Activated CD4-positive, alpha-beta memory T cell treated with anti-CD3 and anti-CD28 coated beads for 36 hours (primary cell): ENCODE measurements at regions of chr9 and their contacts with region 1.

Region 1: DNA sequence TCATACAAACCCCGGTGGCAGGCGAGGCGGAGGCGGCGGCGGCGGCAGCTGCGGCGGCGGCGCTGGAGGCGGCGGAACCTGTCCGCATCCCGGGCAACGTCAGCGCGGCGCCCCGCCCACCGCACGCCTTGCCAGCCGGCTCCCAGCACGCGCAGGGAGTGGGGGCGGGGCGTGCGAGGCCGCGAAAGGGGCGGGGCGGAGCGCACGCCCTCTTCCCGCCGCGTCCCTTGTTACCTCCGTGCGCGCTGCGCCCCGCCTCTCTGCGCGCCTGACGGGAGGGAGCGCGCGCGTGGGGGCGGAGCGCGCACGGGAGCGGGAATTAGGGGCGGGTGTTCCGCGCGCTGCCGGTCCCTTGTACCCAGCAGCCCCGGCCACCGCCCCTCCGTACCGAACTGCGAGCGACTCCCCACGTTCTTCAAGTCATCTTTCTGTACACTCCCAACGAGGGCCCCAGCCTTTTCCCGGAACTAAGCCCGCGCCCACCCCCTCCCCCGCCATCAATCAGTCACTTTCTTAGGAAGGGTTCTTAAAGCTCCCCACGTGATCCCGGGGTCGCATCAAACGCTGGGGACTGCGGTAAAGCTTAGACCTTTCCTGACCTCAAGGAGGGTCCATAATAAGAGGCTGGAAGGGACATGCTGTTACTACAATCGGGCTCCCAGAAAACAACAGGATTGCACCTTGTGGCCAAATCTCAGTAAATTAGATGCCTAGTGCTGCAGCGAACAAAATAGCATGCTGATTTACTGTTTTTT is at the start of gene AGTPBP1:
- DNase-seq: peak; percentile 96
- H3K4me3 Mint-ChIP-seq: peak within 1 kb of the TSS; percentile 94
- H3K27ac Mint-ChIP-seq: peak within 1 kb of the TSS; percentile 97
- H3K4me1 Mint-ChIP-seq: peaks cover 39% of the 10 kb centered on the region
- H3K27me3 Mint-ChIP-seq: peaks cover 7% of the 10 kb centered on the region
- total RNA-seq, gene AGTPBP1: 38.6 to 41.6 TPM

Region 2: GRCh38 chr9:84296146-84296843 is 1445.8 kb before region 1 on chr9:
- CTCF ChIA-PET with region 1: no interaction called
- POLR2A ChIA-PET with region 1: no interaction called
- intact Hi-C with region 1: loop called (anchors 10 kb)
- DNase-seq: peak; percentile 78
- H3K4me3 Mint-ChIP-seq: peak overlapping the region; percentile 49
- H3K27ac Mint-ChIP-seq: peak overlapping the region; percentile 98
- H3K4me1 Mint-ChIP-seq: peaks cover 58% of the 10 kb centered on the region
- H3K27me3 Mint-ChIP-seq: no peaks in the 10 kb centered on the region

Region 3: DNA sequence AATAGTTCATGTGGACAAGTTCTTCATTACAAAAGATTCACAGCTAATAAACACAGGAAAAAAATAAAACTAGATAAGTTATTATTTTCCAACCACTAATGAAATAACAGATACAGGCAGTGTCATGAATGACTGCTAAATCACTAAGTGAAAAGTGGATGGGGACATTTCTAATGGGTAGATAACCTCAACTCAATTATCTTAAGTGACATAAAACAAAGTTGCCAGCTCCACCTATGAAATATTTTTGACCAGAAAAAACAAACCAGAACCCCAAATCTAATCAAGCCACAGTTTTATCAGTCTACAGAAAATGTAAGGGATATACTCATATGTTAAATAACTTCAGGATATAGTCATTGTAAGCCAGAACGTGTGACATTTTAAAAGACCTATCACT is 74.7 kb before region 1 on chr9:
- CTCF ChIA-PET with region 1: no interaction called
- POLR2A ChIA-PET with region 1: no interaction called
- intact Hi-C with region 1: no loop called
- DNase-seq: no peak
- H3K4me3 Mint-ChIP-seq: no peak overlapping the region
- H3K27ac Mint-ChIP-seq: no peak overlapping the region
- H3K4me1 Mint-ChIP-seq: no peaks in the 10 kb centered on the region
- H3K27me3 Mint-ChIP-seq: no peaks in the 10 kb centered on the region

Region 4: DNA sequence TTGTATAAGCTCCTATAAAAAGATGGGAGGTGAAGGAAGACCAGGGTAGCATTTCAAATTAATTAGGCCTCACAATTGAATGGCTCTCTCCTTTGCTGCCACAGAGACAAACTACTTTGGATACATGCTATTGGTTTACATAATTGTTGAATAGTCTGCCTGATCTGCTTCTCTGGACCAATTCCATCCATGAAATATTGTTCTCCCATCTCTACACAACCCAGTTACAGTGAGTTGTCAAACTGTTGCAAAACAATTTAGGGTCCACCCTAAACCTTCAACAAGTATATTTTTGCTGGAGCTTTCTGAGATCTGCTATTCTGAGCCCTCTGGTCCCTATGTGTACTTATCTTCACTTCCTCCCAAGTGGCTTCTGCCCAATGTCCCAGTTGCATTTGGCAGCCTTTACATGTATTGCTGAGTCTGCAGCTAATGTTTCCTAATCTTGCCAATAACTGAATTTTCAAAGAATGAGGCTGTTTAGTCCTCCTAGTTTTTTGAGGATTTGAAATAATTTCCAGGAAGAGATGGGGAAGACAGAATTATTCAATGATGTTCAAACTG is 39.2 kb before region 1 on chr9:
- CTCF ChIA-PET with region 1: interaction called, 14 read pairs
- POLR2A ChIA-PET with region 1: interaction called, 3 read pairs
- intact Hi-C with region 1: loop called (anchors 1 kb)
- DNase-seq: no peak
- H3K4me3 Mint-ChIP-seq: no peak overlapping the region
- H3K27ac Mint-ChIP-seq: no peak overlapping the region
- H3K4me1 Mint-ChIP-seq: peaks cover 30% of the 10 kb centered on the region
- H3K27me3 Mint-ChIP-seq: no peaks in the 10 kb centered on the region

Region 5: GRCh38 chr9:85940832-85941621 is 199.0 kb after region 1 on chr9 and contains the start of gene NAA35:
- CTCF ChIA-PET with region 1: no interaction called
- POLR2A ChIA-PET with region 1: no interaction called
- intact Hi-C with region 1: loop called (anchors 1 kb)
- DNase-seq: peak; percentile 99
- H3K4me3 Mint-ChIP-seq: no peak within 1 kb of the TSS
- H3K27ac Mint-ChIP-seq: peak within 1 kb of the TSS; percentile 96
- H3K4me1 Mint-ChIP-seq: peaks cover 15% of the 10 kb centered on the region
- H3K27me3 Mint-ChIP-seq: no peaks in the 10 kb centered on the region
- total RNA-seq, gene NAA35: 23.0 to 24.3 TPM

Region 6: DNA sequence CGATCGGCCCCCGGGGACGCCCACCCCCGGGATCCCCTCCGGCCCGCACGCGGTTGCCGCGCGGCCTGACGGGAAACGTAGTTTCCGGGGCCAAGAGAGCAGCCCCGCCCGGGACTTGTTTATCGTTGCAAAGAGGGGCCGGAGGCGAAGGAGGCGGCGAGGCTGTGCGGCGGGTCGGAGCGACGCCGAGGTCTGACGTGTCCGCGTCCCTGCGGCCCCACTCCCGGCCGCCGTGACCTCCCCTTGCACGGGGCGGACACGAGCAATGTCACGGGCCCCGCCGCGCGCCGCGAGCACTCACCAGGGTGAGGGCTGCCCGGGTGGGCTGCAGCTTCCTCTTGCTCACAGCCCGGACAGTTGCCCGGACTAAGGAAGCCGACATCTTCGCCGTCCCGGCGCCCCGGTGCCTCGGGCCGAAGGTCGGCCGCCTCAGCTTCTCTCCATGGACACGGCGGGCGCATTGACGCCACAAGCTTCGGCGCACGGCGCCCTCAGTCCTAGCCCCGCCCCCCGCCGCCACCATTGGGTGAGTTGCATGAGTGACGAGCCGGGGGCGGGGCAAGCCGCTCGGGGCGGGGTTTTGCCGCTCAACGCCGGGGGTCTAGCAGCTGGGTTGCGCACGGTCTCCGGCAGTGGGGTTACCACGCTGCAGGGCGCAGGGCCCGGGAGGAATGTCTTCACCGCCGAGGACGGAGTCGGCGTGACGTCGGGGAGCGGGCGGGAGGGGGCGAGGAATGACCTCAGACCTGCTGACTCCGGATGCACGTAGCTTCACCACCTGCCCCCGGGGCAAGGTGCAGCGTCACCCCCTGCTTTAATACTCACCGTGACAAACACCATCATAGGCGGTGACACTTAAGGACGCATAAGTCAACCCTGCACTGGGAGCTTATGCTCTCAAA is 540.3 kb after region 1 on chr9 and contains the start of gene ISCA1:
- CTCF ChIA-PET with region 1: no interaction called
- POLR2A ChIA-PET with region 1: interaction called, 3 read pairs
- intact Hi-C with region 1: loop called (anchors 1 kb)
- DNase-seq: peak; percentile 97
- H3K4me3 Mint-ChIP-seq: peak within 1 kb of the TSS; percentile 92
- H3K27ac Mint-ChIP-seq: peak within 1 kb of the TSS; percentile 96
- H3K4me1 Mint-ChIP-seq: peaks cover 44% of the 10 kb centered on the region
- H3K27me3 Mint-ChIP-seq: no peaks in the 10 kb centered on the region
- total RNA-seq, gene ISCA1: 21.4 to 22.1 TPM

Region 7: DNA sequence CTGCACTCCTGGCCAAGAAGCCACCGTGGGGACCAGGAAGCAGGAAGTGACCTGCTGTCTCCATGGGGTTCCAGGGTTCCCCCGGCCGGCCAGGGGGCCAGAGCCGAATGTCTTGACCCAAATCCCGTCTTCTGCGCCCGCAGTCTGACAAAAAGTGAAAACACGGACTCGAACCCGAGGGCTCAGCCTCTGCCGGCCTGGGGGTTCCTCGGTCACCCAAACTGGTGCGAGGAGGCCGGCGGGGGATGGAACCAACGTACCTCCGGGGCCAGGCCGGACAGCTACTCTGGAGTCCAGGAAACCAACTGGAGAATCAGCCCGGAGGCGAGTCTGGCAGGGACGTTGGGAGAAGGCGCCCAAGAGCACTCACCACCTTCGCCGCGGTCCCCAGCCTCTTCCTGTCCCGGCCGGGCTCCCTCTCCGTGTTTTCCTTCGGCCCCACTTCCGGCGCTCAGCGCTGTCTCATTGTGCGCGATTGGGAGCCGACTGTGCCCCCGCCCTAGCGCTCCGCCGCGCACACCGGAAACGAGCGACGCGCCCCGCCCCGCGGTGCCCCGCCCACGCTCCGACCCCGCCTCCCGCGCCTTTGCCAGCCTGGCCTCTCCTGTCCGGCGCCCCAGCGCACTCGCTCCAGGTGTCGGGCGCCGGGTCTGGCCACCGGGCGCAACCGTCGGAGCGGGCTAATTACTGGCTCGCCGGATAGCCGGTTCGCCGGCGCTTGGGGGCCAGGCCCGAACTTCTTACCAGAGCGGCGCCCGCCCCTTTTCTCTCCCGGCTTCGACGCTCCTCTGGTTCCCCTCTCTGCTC is 612.2 kb after region 1 on chr9 and contains the start of gene TUT7:
- CTCF ChIA-PET with region 1: no interaction called
- POLR2A ChIA-PET with region 1: no interaction called
- intact Hi-C with region 1: loop called (anchors 2 kb)
- DNase-seq: peak; percentile 97
- H3K4me3 Mint-ChIP-seq: peak within 1 kb of the TSS; percentile 98
- H3K27ac Mint-ChIP-seq: peak within 1 kb of the TSS; percentile 100
- H3K4me1 Mint-ChIP-seq: peaks cover 34% of the 10 kb centered on the region
- H3K27me3 Mint-ChIP-seq: no peaks in the 10 kb centered on the region
- total RNA-seq, gene TUT7: 50.7 to 56.8 TPM